Mammary epithelial cell (primary cell): ENCODE measurements at regions of chr10 and their contacts with region 1.

Region 1: DNA sequence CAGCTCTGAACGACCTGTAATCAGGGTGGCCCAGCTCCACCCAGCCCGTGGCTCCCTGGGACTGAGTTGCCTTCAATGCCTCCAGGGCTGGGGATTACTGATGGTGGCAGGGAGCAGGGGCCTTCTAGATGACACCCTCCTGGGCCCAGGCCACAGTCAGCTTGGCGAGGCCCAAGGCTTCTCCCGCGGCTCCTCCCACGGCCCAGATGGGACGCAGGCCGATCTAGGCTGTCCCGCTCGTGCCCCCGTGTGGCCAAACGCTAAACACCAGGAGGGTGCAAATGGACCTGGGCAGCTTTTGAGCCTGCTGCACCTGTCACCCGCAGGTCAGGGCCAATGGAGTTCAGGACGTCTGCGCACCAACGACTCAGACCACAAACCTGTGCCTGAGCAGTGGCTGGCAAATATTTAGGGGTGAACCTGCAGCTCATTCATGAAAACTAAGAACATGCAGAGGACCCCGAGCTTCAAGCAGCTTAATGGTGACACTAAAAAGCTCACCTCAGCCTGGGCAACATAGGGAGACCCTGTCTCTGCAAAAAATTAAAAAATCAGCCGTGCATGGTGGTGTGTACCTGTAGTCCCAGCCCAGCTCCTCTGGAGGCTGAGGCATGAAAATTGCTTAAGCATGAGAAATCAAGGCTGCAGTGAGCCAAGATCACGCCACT is 43.2 kb downstream of the ASB13 start:
- DNase-seq: peak; percentile 79
- H3K4me3 ChIP-seq: no peak overlapping the region
- H3K27ac ChIP-seq: peak overlapping the region; percentile 64
- H3K4me1 ChIP-seq: peaks cover 22% of the 10 kb centered on the region
- H3K27me3 ChIP-seq: no peaks in the 10 kb centered on the region
- CTCF ChIP-seq: peak; percentile 95 to 96

Region 2: GRCh38 chr10:4849555-4850242 is 773.5 kb before region 1 on chr10:
- CTCF ChIA-PET with region 1: no interaction called
- dilution Hi-C with region 1: no loop called
- in situ Hi-C with region 1: loop called in 1 of 2 experiments (anchors 25 kb)
- intact Hi-C with region 1: no loop called
- DNase-seq: peak; percentile 91
- H3K4me3 ChIP-seq: no peak overlapping the region
- H3K27ac ChIP-seq: no peak overlapping the region
- H3K4me1 ChIP-seq: peaks cover 9% of the 10 kb centered on the region
- H3K27me3 ChIP-seq: no peaks in the 10 kb centered on the region
- CTCF ChIP-seq: peak; percentile 100

Region 3: GRCh38 chr10:5356302-5356763 is 266.9 kb before region 1 on chr10:
- CTCF ChIA-PET with region 1: no interaction called
- dilution Hi-C with region 1: no loop called
- in situ Hi-C with region 1: no loop called
- intact Hi-C with region 1: no loop called
- DNase-seq: no peak
- H3K4me3 ChIP-seq: no peak overlapping the region
- H3K27ac ChIP-seq: no peak overlapping the region
- H3K4me1 ChIP-seq: no peaks in the 10 kb centered on the region
- H3K27me3 ChIP-seq: no peaks in the 10 kb centered on the region
- CTCF ChIP-seq: no peak

Region 4: GRCh38 chr10:5446390-5446926 is 176.8 kb before region 1 on chr10:
- CTCF ChIA-PET with region 1: interaction called, 3 read pairs
- dilution Hi-C with region 1: no loop called
- in situ Hi-C with region 1: loop called (anchors 5 kb)
- intact Hi-C with region 1: loop called (anchors 1 kb)
- DNase-seq: peak; percentile 95
- H3K4me3 ChIP-seq: no peak overlapping the region
- H3K27ac ChIP-seq: no peak overlapping the region
- H3K4me1 ChIP-seq: peaks cover 27% of the 10 kb centered on the region
- H3K27me3 ChIP-seq: no peaks in the 10 kb centered on the region
- CTCF ChIP-seq: no peak

Region 5: DNA sequence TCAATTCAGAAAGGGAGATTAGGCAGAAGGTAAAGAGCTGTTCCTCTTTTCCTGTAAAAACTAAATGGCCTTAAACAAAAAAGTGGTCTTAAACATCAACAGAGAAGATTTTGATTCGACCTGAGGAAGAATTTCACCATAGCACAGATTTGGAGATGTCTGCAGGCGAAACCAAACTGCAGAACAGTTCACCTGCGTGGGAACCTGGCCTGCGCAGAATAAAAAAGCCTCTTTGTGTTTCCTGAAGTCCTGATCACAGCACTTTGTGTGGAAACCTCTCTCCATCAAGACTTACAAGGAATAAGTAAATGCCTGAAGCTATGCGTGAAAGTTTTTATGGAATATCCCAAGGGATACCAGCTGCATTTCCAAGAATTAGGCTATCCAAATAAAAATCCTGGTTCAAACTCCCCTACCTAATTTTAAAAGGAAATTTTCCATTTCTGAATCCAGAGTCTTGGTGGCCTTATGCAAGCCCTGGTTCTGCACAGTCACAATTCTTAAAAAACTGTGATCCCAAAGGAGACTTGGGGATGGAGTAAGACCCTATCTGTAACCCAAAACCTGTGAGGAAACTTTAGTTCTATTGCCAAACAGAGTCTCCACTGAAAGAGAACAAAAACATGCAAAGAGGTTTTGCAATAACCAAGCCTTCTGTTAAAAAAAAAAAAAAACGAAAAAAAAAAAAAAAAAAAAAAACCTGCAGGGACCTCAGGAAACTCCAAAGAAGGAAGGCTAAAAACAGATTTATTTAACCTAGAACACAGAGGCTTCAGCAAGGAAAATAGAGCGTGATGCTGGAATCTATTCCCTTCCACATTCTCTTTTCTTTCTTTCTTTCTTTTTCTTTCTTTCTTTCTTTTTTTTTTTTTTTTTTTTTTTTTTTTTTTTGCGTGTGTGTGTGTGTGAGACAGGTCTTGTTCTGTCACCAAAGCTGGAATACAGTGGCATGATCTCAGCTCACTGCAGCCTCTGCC is 88.0 kb before region 1 on chr10:
- CTCF ChIA-PET with region 1: no interaction called
- dilution Hi-C with region 1: no loop called
- in situ Hi-C with region 1: loop called in 1 of 2 experiments (anchors 10 kb)
- intact Hi-C with region 1: no loop called
- DNase-seq: peak; percentile 63
- H3K4me3 ChIP-seq: no peak overlapping the region
- H3K27ac ChIP-seq: peak overlapping the region; percentile 93
- H3K4me1 ChIP-seq: peaks cover 44% of the 10 kb centered on the region
- H3K27me3 ChIP-seq: no peaks in the 10 kb centered on the region
- CTCF ChIP-seq: no peak

Region 6: GRCh38 chr10:5583525-5584175 is 39.6 kb before region 1 on chr10:
- CTCF ChIA-PET with region 1: no interaction called
- dilution Hi-C with region 1: loop called (anchors 5 kb)
- in situ Hi-C with region 1: no loop called
- intact Hi-C with region 1: loop called (anchors 1 kb)
- DNase-seq: peak; percentile 98
- H3K4me3 ChIP-seq: peak overlapping the region in 2 of 3 experiments; percentile 4 to 32
- H3K27ac ChIP-seq: peak overlapping the region; percentile 100
- H3K4me1 ChIP-seq: peaks cover 34% of the 10 kb centered on the region
- H3K27me3 ChIP-seq: no peaks in the 10 kb centered on the region
- CTCF ChIP-seq: peak in 1 of 2 donors; percentile 12

Region 7: GRCh38 chr10:5692461-5693358 is 69.5 kb after region 1 on chr10:
- CTCF ChIA-PET with region 1: no interaction called
- dilution Hi-C with region 1: loop called (anchors 5 kb)
- in situ Hi-C with region 1: no loop called
- intact Hi-C with region 1: no loop called
- DNase-seq: peak; percentile 58
- H3K4me3 ChIP-seq: peak overlapping the region; percentile 51 to 65 (median 53)
- H3K27ac ChIP-seq: peak overlapping the region; percentile 79
- H3K4me1 ChIP-seq: peaks cover 20% of the 10 kb centered on the region
- H3K27me3 ChIP-seq: no peaks in the 10 kb centered on the region
- CTCF ChIP-seq: no peak

Region 8: GRCh38 chr10:7111561-7111960 is 1488.3 kb after region 1 on chr10:
- CTCF ChIA-PET with region 1: no interaction called
- dilution Hi-C with region 1: no loop called
- in situ Hi-C with region 1: no loop called
- intact Hi-C with region 1: no loop called
- DNase-seq: peak; percentile 86
- H3K4me3 ChIP-seq: no peak overlapping the region
- H3K27ac ChIP-seq: no peak overlapping the region
- H3K4me1 ChIP-seq: no peaks in the 10 kb centered on the region
- H3K27me3 ChIP-seq: no peaks in the 10 kb centered on the region
- CTCF ChIP-seq: no peak